ENCODE measurements at regions of chr19 and their contacts with region 1.

Region 1: DNA sequence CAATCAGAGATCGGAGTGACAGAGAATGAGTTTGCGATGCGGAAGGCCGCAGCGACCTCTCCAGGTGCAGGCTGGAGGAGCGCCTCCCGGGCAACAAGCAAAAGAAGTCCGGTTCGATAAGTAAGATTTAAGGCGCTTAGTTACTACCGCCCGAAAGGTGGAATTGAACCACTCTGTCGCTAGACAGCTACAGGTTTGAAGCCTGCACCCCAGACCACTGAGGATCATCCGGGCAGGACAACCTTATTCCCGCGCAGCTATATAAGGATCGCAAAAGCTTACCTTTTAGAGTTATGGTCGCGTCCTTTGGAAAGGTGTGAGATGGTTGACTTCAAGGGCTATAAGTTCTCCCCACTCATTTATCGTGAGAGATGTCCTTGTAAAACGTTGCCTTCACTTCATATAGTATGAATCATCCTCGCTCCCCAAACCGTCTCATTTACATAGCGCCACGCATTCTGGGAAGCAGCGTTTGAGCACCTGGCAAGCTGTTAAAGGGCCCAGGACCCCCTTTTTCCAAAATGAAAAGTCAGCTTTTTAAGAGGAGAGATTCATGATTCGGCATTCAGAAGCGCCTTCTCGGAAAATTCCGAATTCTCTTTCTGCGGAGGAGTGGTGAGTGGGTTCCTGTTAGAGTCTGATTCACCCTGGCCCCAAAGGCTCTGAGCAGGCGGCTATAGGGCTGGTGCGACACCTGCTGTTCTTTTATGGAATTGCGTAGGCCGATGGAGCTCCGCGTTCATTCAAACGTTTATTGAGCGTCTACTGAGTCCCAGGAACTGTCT is 10.8 kb downstream of the FOSB start:
- DNase-seq: peak; percentile 80 to 92 (median 89)
- H3K4me3 ChIP-seq: peak overlapping the region; percentile 80
- H3K4me3 Mint-ChIP-seq: peak overlapping the region; percentile 87 to 96 (median 91)
- H3K27ac ChIP-seq: peak overlapping the region; percentile 96
- H3K27ac Mint-ChIP-seq: peak overlapping the region; percentile 97 to 100 (median 99)
- H3K4me1 ChIP-seq: peaks cover 16% of the 10 kb centered on the region
- H3K4me1 Mint-ChIP-seq: peaks cover 39 to 43% (median 39%) of the 10 kb centered on the region in 3 donors
- H3K27me3 ChIP-seq: no peaks in the 10 kb centered on the region
- H3K27me3 Mint-ChIP-seq: peaks cover 0 to 31% of the 10 kb centered on the region in 2 donors

Region 2: DNA sequence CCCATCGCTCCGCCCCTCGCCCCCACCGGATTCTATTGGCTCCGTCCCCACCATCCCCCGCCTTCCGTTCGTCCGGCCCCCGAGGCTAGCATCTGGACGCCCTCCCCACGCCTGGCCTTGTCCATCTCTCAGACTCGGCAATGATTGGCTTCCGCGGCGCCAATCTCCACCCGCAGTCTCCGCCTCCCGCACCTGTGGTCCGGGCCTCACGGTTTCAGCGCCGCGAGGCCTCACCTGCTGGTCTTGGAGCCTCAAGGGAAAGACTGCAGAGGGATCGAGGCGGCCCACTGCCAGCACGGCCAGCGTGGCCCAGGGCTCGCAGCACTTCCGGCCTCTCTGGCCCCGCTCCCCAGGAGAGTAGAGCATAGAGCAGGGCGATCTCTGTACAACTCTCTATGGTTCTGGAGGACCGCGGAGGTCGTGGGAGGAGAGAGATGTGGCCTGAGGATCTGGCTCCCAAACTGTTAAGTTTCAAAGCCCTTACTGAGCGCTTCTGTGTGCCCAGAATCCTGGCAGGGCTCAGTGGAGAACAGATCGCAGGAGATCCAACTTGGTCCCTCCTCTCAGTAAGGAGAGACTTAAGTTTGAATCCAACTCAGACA is 55.0 kb before region 1 on chr19 and contains the start of gene ERCC1:
- CTCF ChIA-PET with region 1: interaction called, 75 read pairs
- POLR2A ChIA-PET with region 1: interaction called, 4 read pairs
- DNase-seq: peak in 3 of 5 donors; percentile 81 to 88 (median 86)
- H3K4me3 ChIP-seq: peak within 1 kb of the TSS; percentile 80
- H3K4me3 Mint-ChIP-seq: peak within 1 kb of the TSS; percentile 85 to 99 (median 91)
- H3K27ac ChIP-seq: peak within 1 kb of the TSS; percentile 79
- H3K27ac Mint-ChIP-seq: peak within 1 kb of the TSS; percentile 63 to 97 (median 92)
- H3K4me1 ChIP-seq: peaks cover 26% of the 10 kb centered on the region
- H3K4me1 Mint-ChIP-seq: peaks cover 41 to 65% (median 46%) of the 10 kb centered on the region in 3 donors
- H3K27me3 ChIP-seq: no peaks in the 10 kb centered on the region
- H3K27me3 Mint-ChIP-seq: peaks cover 0 to 2% of the 10 kb centered on the region in 2 donors
- total RNA-seq, gene ERCC1: 75.7 to 82.6 TPM

Region 3: GRCh38 chr19:45496349-45496953 is 17.8 kb after region 1 on chr19:
- CTCF ChIA-PET with region 1: interaction called, 18 read pairs
- POLR2A ChIA-PET with region 1: no interaction called
- DNase-seq: peak in 3 of 5 donors; percentile 38 to 71 (median 62)
- H3K4me3 ChIP-seq: peak overlapping the region; percentile 47
- H3K4me3 Mint-ChIP-seq: peak overlapping the region; percentile 33 to 90 (median 82)
- H3K27ac ChIP-seq: no peak overlapping the region
- H3K27ac Mint-ChIP-seq: peak overlapping the region in 3 of 8 donors; percentile 43 to 81 (median 53)
- H3K4me1 ChIP-seq: peaks cover 41% of the 10 kb centered on the region
- H3K4me1 Mint-ChIP-seq: peaks cover 31 to 48% (median 46%) of the 10 kb centered on the region in 3 donors
- H3K27me3 ChIP-seq: peaks cover 15% of the 10 kb centered on the region
- H3K27me3 Mint-ChIP-seq: peaks cover 14 to 22% of the 10 kb centered on the region in 2 donors

Region 4: DNA sequence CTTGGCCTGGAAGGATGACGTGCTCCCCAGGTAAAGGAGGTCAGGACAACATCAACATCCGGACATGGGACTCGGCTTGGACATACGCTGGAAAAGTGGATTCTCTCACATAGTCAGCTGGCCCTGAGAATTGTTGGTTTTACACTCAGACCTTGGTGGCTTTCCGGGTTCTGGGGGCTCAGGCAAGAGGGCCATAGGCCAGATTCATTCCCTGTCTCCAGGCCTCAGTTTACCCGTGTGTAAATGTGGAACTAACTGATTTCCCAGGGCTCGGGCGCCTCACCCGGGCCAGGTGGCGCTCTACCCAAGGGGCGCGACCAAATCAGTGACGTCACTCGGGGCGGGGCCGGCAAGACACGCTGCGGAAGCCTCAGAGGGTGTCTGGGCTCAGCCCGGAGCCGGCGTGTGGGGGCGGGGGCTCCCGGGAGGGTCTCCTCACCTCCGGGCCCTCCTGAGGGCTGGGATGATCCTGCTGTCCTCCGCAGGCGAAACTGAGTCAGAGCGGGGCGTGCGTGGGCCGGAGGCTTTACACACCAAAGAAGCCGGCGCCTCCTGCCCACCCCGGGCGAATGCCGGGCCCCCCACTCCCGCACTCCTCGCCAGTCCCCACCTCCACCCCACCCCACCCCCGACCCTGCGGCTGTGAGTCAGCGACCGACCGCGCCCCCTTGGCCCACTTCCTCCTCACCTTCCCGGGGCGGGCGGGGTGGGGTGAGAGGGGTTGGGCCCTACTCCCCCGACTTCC is 27.8 kb after region 1 on chr19:
- CTCF ChIA-PET with region 1: interaction called, 11 read pairs
- POLR2A ChIA-PET with region 1: no interaction called
- DNase-seq: peak; percentile 95 to 99 (median 97)
- H3K4me3 ChIP-seq: peak overlapping the region; percentile 98
- H3K4me3 Mint-ChIP-seq: peak overlapping the region; percentile 90 to 100 (median 96)
- H3K27ac ChIP-seq: peak overlapping the region; percentile 97
- H3K27ac Mint-ChIP-seq: peak overlapping the region; percentile 90 to 100 (median 98)
- H3K4me1 ChIP-seq: peaks cover 31% of the 10 kb centered on the region
- H3K4me1 Mint-ChIP-seq: peaks cover 35 to 46% (median 40%) of the 10 kb centered on the region in 3 donors
- H3K27me3 ChIP-seq: no peaks in the 10 kb centered on the region
- H3K27me3 Mint-ChIP-seq: peaks cover 0 to 2% of the 10 kb centered on the region in 2 donors

Measured in CD8-positive, alpha-beta memory T cell (primary cell).